Activated naive CD4-positive, alpha-beta T cell treated with anti-CD3 and anti-CD28 coated beads, Interleukin-2, amount 10 ng/mL, durations not matched to agents 7 days and 5 days (primary cell): ENCODE measurements at regions of chr21 and their contacts with region 1.

Region 1: GRCh38 chr21:25421327-25422028 is 185.8 kb downstream of the MRPL39 start:
- DNase-seq: peak; percentile 60
- H3K4me3 Mint-ChIP-seq: peak overlapping the region; percentile 24
- H3K27ac Mint-ChIP-seq: peak overlapping the region; percentile 57
- H3K4me1 Mint-ChIP-seq: peaks cover 14% of the 10 kb centered on the region
- H3K27me3 Mint-ChIP-seq: no peaks in the 10 kb centered on the region

Region 2: GRCh38 chr21:25343774-25344545 is 77.5 kb before region 1 on chr21:
- CTCF ChIA-PET with region 1: no interaction called
- DNase-seq: no peak
- H3K4me3 Mint-ChIP-seq: no peak overlapping the region
- H3K27ac Mint-ChIP-seq: no peak overlapping the region
- H3K4me1 Mint-ChIP-seq: no peaks in the 10 kb centered on the region
- H3K27me3 Mint-ChIP-seq: peaks cover 5% of the 10 kb centered on the region

Region 3: DNA sequence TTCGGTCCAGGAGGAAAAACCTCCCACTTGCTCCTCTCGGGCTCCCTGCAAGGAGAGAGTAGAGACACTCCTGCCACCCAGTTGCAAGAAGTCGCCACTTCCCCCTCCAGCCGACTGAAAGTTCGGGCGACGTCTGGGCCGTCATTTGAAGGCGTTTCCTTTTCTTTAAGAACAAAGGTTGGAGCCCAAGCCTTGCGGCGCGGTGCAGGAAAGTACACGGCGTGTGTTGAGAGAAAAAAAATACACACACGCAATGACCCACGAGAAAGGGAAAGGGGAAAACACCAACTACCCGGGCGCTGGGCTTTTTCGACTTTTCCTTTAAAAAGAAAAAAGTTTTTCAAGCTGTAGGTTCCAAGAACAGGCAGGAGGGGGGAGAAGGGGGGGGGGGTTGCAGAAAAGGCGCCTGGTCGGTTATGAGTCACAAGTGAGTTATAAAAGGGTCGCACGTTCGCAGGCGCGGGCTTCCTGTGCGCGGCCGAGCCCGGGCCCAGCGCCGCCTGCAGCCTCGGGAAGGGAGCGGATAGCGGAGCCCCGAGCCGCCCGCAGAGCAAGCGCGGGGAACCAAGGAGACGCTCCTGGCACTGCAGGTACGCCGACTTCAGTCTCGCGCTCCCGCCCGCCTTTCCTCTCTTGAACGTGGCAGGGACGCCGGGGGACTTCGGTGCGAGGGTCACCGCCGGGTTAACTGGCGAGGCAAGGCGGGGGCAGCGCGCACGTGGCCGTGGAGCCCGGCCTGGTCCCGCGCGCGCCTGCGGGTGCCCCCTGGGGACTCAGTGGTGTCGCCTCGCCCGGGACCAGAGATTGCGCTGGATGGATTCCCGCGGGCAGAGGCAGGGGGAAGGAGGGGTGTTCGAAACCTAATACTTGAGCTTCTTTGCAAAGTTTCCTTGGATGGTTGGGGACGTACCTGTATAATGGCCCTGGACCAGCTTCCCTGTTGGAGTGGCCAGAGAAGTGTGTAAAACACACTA is 140.5 kb after region 1 on chr21:
- CTCF ChIA-PET with region 1: interaction called, 42 read pairs
- DNase-seq: peak; percentile 74
- H3K4me3 Mint-ChIP-seq: peak overlapping the region; percentile 89
- H3K27ac Mint-ChIP-seq: peak overlapping the region; percentile 94
- H3K4me1 Mint-ChIP-seq: peaks cover 64% of the 10 kb centered on the region
- H3K27me3 Mint-ChIP-seq: no peaks in the 10 kb centered on the region

Region 4: DNA sequence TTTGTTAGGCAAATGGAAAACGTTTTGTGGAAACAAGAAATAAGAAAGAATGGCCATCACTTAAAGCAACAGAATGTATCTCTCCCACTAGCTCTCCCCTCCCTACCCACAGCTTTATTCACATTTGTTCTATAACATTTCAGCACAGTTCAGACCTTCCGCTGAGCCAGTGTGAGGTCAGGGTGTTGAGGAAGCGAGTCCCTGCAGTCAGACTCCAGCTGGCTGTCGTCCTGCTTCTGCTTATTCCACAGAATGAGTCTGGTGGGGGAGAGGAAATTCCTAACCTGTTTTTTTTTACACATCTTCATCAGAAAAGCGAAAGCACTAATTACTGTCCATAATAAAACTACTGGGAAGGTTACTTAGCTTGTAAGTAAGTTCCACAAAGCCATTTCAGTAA is 146.8 kb after region 1 on chr21:
- CTCF ChIA-PET with region 1: interaction called, 42 read pairs
- DNase-seq: no peak
- H3K4me3 Mint-ChIP-seq: no peak overlapping the region
- H3K27ac Mint-ChIP-seq: no peak overlapping the region
- H3K4me1 Mint-ChIP-seq: peaks cover 72% of the 10 kb centered on the region
- H3K27me3 Mint-ChIP-seq: no peaks in the 10 kb centered on the region